H1 (cell line): ENCODE measurements at regions of chr11 and their contacts with region 1.

Region 1: DNA sequence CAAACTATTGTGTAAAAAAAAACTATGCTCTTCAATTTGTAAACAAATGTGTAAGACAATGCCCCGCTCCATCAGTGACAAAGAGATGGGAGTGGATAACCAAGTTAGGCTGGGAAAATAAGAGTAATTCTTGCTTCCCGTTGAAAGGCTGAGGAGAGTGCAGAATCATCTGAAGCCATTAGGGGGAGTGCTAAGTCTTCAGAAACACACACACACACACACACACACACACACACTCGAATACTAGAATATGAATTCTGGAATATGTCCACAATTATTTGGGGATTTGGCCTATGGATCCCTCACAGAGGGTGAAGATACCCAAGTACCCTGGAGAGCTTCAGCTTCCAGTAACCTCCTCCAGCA is 27.8 kb upstream of the ROBO3 start:
- DNase-seq: peak in 1 of 2 experiments; percentile 52
- H3K4me3 ChIP-seq: no peak overlapping the region
- H3K27ac ChIP-seq: no peak overlapping the region
- H3K4me1 ChIP-seq: peaks cover 0 to 11% (median 3%) of the 10 kb centered on the region in 4 experiments; a peak in 6 of 7 replicates
- H3K27me3 ChIP-seq: peaks cover 46 to 58% (median 53%) of the 10 kb centered on the region in 4 experiments
- CTCF ChIP-seq: peak in 2 of 3 experiments; percentile 71 to 74; a peak in 3 of 4 replicates
- EP300 ChIP-seq: no peak
- POLR2A ChIP-seq: no peak
- RAD21 ChIP-seq: peak; percentile 58 to 69

Region 2: DNA sequence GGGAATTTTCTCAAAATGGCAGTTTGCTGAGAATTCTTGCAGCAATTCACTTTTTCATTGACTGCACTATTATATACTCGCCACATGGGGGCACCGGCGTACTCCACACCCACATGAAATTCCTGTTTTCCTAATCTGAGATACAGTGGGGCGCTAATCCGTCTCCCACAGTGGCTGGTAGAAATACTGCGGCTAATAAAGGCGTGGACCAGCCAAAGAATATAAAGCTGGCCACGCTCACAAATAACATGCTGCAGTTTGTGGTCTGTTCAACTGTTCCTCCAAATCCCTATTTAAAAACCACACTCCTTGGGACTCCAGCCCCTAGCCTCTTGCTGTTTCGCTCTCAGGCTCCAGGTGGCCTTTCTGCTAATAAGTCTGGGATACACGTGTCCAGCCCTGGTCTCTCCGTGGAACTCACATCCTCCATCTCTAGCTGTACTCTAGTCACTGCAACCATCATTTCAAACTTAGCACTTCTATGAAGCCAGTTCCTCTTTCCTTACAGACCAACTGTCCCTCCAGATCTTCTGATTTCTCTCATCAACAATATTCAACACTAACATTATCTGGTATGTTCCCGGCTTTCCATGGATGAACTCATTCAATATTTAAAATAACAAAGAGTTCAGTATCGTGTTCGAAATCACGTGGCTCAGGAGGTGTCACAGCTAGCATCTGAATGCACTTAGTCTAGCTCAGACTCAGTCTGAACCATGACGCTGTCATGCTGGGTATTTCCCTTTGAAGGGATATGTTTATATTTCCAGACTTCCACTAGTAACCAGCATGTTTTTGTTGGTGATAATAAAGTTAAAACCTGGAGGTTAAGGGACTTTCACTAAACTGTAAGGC is 192.8 kb before region 1 on chr11:
- CTCF ChIA-PET with region 1: interaction called, 12 read pairs
- POLR2A ChIA-PET with region 1: no interaction called
- DNase-seq: peak in 1 of 2 experiments; percentile 68
- H3K4me3 ChIP-seq: peak overlapping the region in 1 of 4 experiments; percentile 37; a peak in 2 of 8 replicates
- H3K27ac ChIP-seq: no peak overlapping the region
- H3K4me1 ChIP-seq: peaks cover 0 to 4% (median 2%) of the 10 kb centered on the region in 4 experiments; a peak in 3 of 7 replicates
- H3K27me3 ChIP-seq: no peaks in the 10 kb centered on the region
- CTCF ChIP-seq: peak; percentile 38 to 87 (median 75)
- EP300 ChIP-seq: no peak
- POLR2A ChIP-seq: no peak
- RAD21 ChIP-seq: peak; percentile 85

Region 3: DNA sequence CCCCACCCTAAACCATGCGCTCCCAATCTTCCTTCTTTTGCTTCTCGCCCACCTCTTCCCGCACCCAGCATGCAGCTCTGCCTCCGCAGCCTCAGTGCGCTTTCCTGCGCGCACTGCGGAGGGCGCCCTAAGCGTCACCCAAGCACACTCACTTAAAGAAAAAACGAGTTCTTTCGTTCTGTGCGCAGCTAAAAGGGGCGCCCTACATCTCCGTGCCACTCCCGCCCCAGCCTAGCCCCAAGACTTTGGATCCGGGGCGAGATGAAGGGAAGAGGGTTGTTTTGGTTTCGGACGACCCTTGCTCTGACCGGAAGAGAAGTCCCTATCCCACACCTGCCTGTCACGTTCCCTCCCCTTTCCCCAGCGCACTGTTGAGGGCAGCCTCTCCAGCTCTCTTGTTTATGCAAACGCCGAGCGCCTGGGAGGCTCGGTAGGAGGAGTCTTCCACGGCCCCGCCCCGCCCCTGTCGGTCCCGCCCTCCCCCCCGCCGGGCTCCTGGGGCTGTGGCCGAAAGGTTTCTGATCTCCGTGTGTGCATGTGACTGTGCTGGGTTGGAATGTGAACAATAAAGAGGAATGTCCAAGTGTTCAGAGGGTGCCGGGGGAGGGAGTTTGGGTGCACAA is 90.7 kb before region 1 on chr11:
- CTCF ChIA-PET with region 1: interaction called, 15 read pairs
- POLR2A ChIA-PET with region 1: no interaction called
- DNase-seq: peak; percentile 77 to 88
- H3K4me3 ChIP-seq: peak overlapping the region; percentile 72 to 83 (median 77)
- H3K27ac ChIP-seq: no peak overlapping the region
- H3K4me1 ChIP-seq: peaks cover 0 to 19% (median 16%) of the 10 kb centered on the region in 4 experiments; a peak in 6 of 7 replicates
- H3K27me3 ChIP-seq: peaks cover 92 to 99% (median 97%) of the 10 kb centered on the region in 4 experiments
- CTCF ChIP-seq: peak; percentile 39 to 73 (median 71); a peak in 3 of 4 replicates
- EP300 ChIP-seq: no peak
- POLR2A ChIP-seq: no peak
- RAD21 ChIP-seq: peak; percentile 29 to 36; a peak in 2 of 4 replicates

Region 4: GRCh38 chr11:124823504-124824372 is 13.7 kb before region 1 on chr11:
- CTCF ChIA-PET with region 1: interaction called, 21 read pairs
- POLR2A ChIA-PET with region 1: no interaction called
- DNase-seq: no peak
- H3K4me3 ChIP-seq: no peak overlapping the region
- H3K27ac ChIP-seq: no peak overlapping the region
- H3K4me1 ChIP-seq: peaks cover 0 to 2% (median 0%) of the 10 kb centered on the region in 4 experiments; a peak in 1 of 7 replicates
- H3K27me3 ChIP-seq: no peaks in the 10 kb centered on the region; a peak in 1 of 7 replicates
- CTCF ChIP-seq: no peak
- EP300 ChIP-seq: no peak
- POLR2A ChIP-seq: no peak
- RAD21 ChIP-seq: no peak

Region 5: GRCh38 chr11:124875943-124876817 is 38.7 kb after region 1 on chr11:
- CTCF ChIA-PET with region 1: interaction called, 52 read pairs
- POLR2A ChIA-PET with region 1: interaction called, 4 read pairs
- DNase-seq: peak; percentile 78 to 93
- H3K4me3 ChIP-seq: peak overlapping the region; percentile 56 to 76 (median 62)
- H3K27ac ChIP-seq: peak overlapping the region; percentile 54; the same call in 1 of the 2 replicates
- H3K4me1 ChIP-seq: peaks cover 0 to 12% (median 8%) of the 10 kb centered on the region in 4 experiments; a peak in 5 of 7 replicates
- H3K27me3 ChIP-seq: peaks cover 5 to 48% (median 41%) of the 10 kb centered on the region in 4 experiments
- CTCF ChIP-seq: peak; percentile 65 to 77 (median 75)
- EP300 ChIP-seq: no peak
- POLR2A ChIP-seq: peak in 1 of 2 experiments; percentile 17; a peak in 1 of 3 replicates
- RAD21 ChIP-seq: peak in 1 of 2 experiments; percentile 37; a peak in 2 of 4 replicates

Region 6: GRCh38 chr11:125001079-125001778 is 163.8 kb after region 1 on chr11:
- CTCF ChIA-PET with region 1: no interaction called
- POLR2A ChIA-PET with region 1: no interaction called
- DNase-seq: no peak
- H3K4me3 ChIP-seq: no peak overlapping the region
- H3K27ac ChIP-seq: no peak overlapping the region
- H3K4me1 ChIP-seq: no peaks in the 10 kb centered on the region
- H3K27me3 ChIP-seq: no peaks in the 10 kb centered on the region
- CTCF ChIP-seq: no peak
- EP300 ChIP-seq: no peak
- POLR2A ChIP-seq: no peak
- RAD21 ChIP-seq: no peak